Panc1 (cell line): ENCODE measurements at regions of chr11 and their contacts with region 1.

Region 1: GRCh38 chr11:9092853-9093778 is 1.7 kb upstream of the SCUBE2 start:
- DNase-seq: no peak
- ATAC-seq: peak; percentile 53; the same call in 1 of the 2 replicates
- H3K4me3 ChIP-seq: no peak overlapping the region
- H3K27ac ChIP-seq: no peak overlapping the region
- H3K4me1 ChIP-seq: peaks cover 11% of the 10 kb centered on the region; the same call in 1 of the 2 replicates
- H3K27me3 ChIP-seq: peaks cover 7% of the 10 kb centered on the region; the same call in 1 of the 2 replicates
- CTCF ChIP-seq: peak; percentile 52

Region 2: DNA sequence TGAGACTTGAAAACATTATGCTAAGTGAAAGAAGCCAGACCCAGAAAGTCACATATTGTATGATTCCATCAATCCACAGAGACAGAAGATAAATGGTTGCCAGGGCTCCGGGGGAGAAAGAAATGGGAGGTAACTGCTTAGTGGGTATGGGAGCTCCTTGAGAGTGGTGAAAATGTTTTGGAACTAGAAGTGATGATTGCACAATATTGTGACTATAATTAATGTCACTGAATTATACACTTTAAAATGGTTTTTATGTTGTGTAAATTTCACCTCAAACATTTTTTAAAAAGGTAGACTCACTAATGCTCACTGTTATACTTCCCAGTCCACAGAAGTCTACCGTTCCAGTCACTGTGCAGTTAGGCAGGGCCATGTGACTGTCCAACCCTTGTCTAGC is 214.3 kb before region 1 on chr11:
- CTCF ChIA-PET with region 1: no interaction called
- POLR2A ChIA-PET with region 1: interaction called, 18 read pairs
- in situ Hi-C with region 1: no loop called
- intact Hi-C with region 1: no loop called
- DNase-seq: no peak
- ATAC-seq: no peak
- H3K4me3 ChIP-seq: no peak overlapping the region
- H3K27ac ChIP-seq: no peak overlapping the region
- H3K4me1 ChIP-seq: no peaks in the 10 kb centered on the region
- H3K27me3 ChIP-seq: no peaks in the 10 kb centered on the region; the same call in 1 of the 2 replicates
- CTCF ChIP-seq: no peak

Region 3: DNA sequence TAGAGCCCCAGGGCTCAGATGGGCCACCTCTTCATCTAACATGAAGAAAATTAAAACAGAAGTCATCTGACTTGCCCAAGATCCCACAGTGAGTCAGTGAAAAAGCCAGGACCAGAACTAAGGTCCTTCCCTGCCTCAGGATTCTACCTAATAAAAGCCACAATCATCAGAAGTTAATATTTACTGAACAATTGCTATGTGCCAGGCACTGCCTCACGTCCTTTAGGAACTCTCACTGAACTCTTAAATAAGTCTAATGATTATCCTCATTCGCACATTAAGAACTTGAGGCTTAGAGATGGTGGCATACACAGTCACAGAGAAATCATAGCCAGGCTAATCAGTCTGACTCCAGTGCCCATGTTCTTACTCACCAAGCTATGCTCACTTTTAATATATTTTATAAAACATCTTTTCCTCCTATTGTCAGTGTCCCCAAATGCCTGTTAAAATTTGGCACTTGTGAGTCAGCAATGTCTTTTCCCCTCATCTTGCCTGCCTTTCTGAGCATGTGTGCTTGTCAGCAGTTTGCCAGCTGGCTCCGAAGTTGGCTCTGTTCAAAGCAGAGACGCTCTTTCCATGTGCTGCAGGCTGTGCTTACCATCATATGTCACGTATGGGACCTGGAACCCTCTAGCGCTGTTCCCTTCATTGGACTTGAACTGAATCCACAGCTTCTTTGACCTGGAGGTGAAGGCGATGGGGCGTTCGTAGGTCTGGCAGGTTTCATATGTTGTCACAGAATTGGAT is 67.8 kb before region 1 on chr11:
- CTCF ChIA-PET with region 1: no interaction called
- POLR2A ChIA-PET with region 1: no interaction called
- in situ Hi-C with region 1: no loop called
- intact Hi-C with region 1: no loop called
- DNase-seq: no peak
- ATAC-seq: no peak
- H3K4me3 ChIP-seq: no peak overlapping the region
- H3K27ac ChIP-seq: no peak overlapping the region
- H3K4me1 ChIP-seq: no peaks in the 10 kb centered on the region
- H3K27me3 ChIP-seq: no peaks in the 10 kb centered on the region
- CTCF ChIP-seq: no peak

Region 4: DNA sequence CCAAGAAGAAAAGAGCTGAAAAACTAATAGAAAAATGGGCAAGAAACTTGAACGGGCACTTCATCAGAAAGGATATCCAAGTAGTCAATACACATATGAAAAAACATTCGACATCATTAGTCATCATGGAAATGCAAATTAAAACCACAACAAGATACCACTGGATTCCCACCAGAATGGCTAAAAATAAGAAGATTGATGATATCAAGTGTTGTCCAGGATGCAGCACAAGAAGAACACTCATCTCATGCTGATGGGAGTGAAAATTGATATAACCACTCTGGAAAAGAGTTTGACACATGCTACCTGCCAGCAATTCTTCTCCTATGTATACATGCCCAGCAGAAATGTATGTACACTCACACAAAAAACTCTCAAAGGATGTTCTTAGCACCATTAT is 25.2 kb after region 1 on chr11:
- CTCF ChIA-PET with region 1: interaction called, 17 read pairs
- POLR2A ChIA-PET with region 1: no interaction called
- in situ Hi-C with region 1: no loop called
- intact Hi-C with region 1: no loop called
- DNase-seq: no peak
- ATAC-seq: no peak
- H3K4me3 ChIP-seq: no peak overlapping the region
- H3K27ac ChIP-seq: no peak overlapping the region
- H3K4me1 ChIP-seq: no peaks in the 10 kb centered on the region
- H3K27me3 ChIP-seq: no peaks in the 10 kb centered on the region
- CTCF ChIP-seq: no peak

Region 5: DNA sequence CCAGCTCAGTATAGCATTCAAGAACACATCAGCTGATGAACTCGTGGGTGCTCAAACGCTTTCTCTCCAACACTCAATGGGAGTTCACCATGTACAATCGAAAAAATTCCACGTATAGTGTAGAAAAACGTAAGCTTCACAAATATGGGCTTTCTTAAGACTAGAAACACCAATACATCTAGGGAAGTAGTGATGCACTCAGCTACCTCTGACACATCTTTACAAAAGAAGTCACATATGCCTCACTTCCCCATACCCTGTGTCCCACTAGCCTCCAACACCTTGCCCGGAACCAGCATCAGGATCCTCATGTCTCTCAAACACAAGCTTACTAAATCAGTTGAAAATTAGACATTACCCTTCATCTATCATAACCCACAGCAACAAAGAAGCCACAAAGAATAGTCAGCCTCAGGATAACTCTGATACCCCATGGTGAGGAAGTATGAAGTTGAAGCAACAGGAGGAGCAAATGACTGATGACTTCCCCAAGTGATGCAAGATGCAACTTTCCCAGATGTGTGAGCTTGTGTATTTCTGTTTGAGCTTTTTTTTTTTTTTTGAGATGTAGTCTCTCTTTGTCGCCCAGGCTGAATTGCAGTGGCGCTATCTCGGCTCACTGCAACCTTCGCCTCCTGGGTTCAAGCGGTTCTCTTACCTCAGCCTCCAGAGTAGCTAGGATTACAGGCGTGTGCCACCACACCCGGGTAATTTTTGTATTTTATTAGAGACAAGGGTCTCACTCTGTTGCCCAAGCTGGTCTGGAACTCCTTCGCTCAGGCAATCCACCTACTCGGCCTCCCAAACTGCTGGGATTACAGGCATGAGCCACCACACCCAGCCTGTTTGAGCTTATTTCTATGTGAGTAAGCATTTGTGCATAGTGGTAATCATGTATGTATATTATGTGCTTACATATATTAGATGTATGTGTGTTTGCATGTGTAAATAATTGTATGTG is 180.5 kb after region 1 on chr11:
- CTCF ChIA-PET with region 1: interaction called, 11 read pairs
- POLR2A ChIA-PET with region 1: no interaction called
- in situ Hi-C with region 1: no loop called
- intact Hi-C with region 1: no loop called
- DNase-seq: no peak
- ATAC-seq: no peak
- H3K4me3 ChIP-seq: no peak overlapping the region
- H3K27ac ChIP-seq: no peak overlapping the region
- H3K4me1 ChIP-seq: no peaks in the 10 kb centered on the region
- H3K27me3 ChIP-seq: no peaks in the 10 kb centered on the region
- CTCF ChIP-seq: no peak

Region 6: DNA sequence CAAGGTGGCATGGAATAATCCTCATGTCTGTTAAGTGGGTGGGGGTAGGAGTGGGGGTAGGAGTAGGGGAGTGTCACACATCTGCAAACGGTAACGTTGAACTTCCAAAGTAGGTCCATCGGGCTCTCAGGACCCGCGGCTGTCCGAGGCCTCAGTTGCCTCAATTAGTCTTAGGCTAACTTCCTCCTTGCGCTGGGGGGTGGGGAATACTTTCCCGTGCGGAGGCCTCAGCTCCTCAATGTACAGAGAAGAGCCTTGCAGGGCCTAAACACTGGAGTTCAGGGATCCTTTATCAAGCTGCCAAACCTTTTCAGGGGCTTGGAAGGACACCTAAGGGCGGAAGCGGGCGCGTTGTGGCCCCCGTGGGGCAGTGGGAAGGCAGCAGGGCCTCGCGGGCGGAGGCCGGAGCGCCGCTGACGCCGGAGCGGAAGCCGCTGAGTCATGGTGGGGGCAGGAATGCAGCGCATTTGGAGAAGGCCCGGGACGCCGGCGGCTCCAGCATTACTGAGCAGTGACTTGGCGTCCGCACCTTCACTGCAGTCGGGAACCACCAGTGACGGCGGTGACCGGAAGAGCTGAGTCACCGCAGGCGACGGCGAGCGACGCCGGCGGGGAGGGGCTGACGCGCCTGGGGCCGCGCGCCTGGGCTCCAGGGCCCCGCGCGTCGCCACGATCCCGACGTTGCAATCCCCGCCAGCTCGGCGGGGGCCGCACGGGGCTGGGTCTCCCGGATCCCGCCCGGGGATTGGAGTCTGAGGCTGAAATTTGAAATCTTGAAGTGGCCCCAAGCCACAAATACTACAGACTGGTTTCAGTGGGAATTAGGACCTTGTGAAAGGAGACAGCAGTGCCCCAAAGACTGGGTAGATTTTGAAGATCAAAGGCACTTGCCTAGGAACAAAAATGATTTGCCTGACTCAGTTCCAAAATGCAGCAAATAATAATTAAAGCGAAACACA is 271.1 kb after region 1 on chr11:
- CTCF ChIA-PET with region 1: no interaction called
- POLR2A ChIA-PET with region 1: no interaction called
- in situ Hi-C with region 1: no loop called
- intact Hi-C with region 1: no loop called
- DNase-seq: peak; percentile 95
- ATAC-seq: peak; percentile 98
- H3K4me3 ChIP-seq: peak overlapping the region; percentile 29 to 63
- H3K27ac ChIP-seq: peak overlapping the region; percentile 84
- H3K4me1 ChIP-seq: peaks cover 34% of the 10 kb centered on the region
- H3K27me3 ChIP-seq: no peaks in the 10 kb centered on the region
- CTCF ChIP-seq: no peak

Region 7: DNA sequence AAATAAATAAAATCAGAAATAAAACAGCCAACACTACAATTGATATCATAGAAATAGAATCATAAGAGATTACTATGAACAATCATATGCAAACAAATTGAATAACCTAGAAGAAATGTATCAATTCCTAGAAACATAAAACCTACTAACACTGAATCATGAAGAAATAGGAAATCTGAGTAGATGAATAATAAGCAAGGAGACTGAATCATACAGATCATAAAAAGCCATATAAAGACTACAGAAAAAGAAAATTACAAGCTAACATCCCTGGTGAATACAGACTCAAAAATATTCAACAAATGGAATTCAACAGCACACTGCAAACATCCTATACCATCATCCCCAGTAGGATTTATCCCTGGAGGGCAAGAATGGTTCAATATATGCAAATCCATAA is 1065.3 kb after region 1 on chr11:
- CTCF ChIA-PET with region 1: no interaction called
- POLR2A ChIA-PET with region 1: no interaction called
- in situ Hi-C with region 1: no loop called
- intact Hi-C with region 1: no loop called
- DNase-seq: no peak
- ATAC-seq: no peak
- H3K4me3 ChIP-seq: no peak overlapping the region
- H3K27ac ChIP-seq: no peak overlapping the region
- H3K4me1 ChIP-seq: peaks cover 4% of the 10 kb centered on the region
- H3K27me3 ChIP-seq: no peaks in the 10 kb centered on the region
- CTCF ChIP-seq: no peak